ENCODE measurements at regions of chr12 and their contacts with region 1.

Region 1: GRCh38 chr12:44929236-44929885 is 53.2 kb upstream of the NELL2 start:
- DNase-seq: no peak

Region 2: DNA sequence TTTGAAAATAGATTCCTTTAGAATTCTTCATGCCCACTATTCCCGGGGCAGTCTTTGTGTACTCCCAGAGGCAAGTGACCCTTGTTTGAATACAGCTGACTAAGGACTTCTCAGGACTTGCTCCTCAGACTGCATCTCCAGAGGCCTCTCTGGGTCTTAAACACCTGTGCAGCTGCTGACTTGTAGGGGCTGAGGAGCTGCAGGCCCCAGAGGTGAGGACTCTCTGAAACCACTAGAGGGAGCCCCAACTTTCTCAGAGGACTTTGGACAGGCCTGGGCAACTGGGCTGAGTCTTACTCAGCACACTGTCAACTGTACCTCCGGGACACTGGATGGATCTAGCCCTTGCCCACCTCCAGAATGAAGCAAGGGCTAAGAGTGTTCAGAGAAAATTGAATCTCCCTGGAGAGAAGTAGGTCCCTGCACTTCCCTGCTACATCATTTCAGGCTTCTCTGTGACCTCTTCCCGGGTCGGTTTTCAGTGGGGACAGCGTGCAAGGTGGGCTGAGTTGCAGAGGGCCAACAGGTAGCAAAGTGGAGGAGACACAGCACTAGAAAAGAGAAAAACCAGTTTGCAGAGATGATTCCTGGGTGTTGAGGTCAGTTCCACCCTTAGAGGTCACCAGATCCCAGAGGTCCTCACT is 928.9 kb before region 1 on chr12:
- intact Hi-C with region 1: loop called in 1 of 2 experiments (anchors 10 kb)
- DNase-seq: no peak

Region 3: GRCh38 chr12:44915958-44916357 is 13.4 kb before region 1 on chr12:
- intact Hi-C with region 1: no loop called
- DNase-seq: no peak